ENCODE measurements at regions of chr20 and their contacts with region 1.

Region 1: DNA sequence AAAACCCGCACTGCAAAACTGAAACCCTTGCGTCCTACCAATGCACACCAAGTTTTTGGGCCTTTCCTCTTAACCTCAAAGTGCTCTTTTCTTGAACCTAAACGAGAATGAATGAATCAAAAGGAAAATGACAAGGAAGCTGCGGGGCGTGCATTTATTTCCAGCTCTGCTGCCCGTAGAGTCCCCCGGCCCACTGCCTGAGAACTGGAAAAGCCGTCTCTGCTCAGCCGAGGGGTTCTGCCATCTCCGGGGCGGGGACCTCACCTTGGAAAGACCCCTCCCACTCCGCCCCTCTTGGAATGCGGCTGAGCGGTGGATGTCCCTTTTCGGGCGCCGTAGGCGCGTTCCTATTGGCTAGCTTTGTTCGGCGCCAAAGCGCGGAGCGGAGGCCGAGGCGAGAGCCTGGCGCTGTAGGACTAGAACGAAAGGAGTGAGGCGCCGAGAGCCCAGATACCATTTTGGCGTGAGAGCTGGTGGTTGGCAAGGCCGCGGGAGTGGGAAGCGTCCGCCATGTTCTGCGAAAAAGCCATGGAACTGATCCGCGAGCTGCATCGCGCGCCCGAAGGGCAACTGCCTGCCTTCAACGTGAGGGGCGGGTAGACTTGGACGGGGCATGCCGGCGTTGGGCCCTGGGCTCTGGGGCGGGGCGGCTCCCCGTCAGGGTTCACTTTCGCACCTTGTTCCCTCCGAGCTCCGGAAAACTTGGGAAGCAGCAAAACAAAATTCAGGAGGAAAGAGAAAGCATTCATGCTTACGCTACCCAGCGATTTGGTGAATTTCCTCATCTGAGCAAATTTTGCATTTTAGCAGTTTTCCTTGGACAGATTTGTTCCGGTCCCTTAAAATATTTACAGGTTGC is at the start of gene GINS1:
- DNase-seq: peak; percentile 85
- ATAC-seq: peak; percentile 99
- H3K4me3 ChIP-seq: peak within 1 kb of the TSS; percentile 94
- H3K27ac ChIP-seq: peak within 1 kb of the TSS; percentile 72
- H3K4me1 ChIP-seq: peaks cover 1% of the 10 kb centered on the region
- H3K27me3 ChIP-seq: no peaks in the 10 kb centered on the region
- CTCF ChIP-seq: no peak
- POLR2A ChIP-seq: peak; percentile 71
- RAD21 ChIP-seq: no peak
- total RNA-seq, gene GINS1: 6.6 and 12.2 TPM in 2 replicates

Region 2: DNA sequence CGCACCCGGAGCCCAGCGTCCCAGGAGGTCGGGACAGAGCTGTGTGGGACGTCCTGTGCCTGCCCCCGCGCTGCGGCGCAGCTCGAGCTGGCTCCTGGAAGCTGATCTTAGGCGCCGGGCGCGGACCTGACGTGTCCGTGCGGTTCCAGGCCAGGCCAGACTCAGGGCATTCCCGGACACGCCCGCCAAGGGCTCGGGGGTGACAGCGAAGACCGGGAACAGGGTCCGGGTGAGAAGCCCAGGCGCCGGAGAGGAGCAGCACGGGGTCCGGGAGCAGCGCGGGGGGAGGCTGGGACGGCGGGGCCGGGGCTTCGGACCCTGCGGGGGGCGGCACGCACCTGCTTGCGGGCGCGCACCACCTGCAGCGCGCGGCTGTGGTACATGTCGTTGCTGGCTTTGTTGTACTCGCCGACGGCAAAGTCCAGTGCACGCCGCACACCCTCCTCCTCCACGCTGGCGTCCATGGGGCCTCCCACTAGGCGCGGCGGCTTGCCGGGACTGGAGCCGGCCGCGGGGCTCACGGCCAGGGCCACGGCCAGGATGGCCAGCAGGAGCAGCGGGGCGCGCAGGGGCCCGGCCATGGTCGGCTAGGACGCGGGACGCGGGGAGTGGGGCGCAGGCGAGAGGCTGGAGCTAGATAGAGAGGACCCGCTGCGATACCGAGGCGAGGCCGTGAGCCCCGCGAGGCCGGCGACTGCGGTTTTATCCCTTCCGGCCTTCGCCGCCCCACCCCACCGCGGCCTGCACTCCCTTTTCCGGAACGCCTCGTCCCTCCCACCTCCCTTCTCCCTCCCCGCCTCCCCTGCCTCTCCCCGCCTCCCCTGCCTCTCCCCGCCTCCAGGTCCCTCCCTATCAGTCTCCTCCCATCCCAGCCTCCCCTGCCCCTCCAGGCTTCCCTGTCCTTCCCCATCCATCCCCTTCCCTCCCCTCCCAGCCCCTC is 1770.0 kb before region 1 on chr20 and contains the start of gene CST3:
- CTCF ChIA-PET with region 1: no interaction called
- POLR2A ChIA-PET with region 1: no interaction called
- dilution Hi-C with region 1: no loop called
- in situ Hi-C with region 1: loop called (anchors 25 kb)
- intact Hi-C with region 1: no loop called
- DNase-seq: peak; percentile 81
- ATAC-seq: peak; percentile 89
- H3K4me3 ChIP-seq: peak within 1 kb of the TSS; percentile 96
- H3K27ac ChIP-seq: peak within 1 kb of the TSS; percentile 98
- H3K4me1 ChIP-seq: peaks cover 11% of the 10 kb centered on the region
- H3K27me3 ChIP-seq: no peaks in the 10 kb centered on the region
- CTCF ChIP-seq: no peak
- POLR2A ChIP-seq: peak; percentile 92
- RAD21 ChIP-seq: no peak
- total RNA-seq, gene CST3: 26.0 and 30.8 TPM in 2 replicates

Region 3: DNA sequence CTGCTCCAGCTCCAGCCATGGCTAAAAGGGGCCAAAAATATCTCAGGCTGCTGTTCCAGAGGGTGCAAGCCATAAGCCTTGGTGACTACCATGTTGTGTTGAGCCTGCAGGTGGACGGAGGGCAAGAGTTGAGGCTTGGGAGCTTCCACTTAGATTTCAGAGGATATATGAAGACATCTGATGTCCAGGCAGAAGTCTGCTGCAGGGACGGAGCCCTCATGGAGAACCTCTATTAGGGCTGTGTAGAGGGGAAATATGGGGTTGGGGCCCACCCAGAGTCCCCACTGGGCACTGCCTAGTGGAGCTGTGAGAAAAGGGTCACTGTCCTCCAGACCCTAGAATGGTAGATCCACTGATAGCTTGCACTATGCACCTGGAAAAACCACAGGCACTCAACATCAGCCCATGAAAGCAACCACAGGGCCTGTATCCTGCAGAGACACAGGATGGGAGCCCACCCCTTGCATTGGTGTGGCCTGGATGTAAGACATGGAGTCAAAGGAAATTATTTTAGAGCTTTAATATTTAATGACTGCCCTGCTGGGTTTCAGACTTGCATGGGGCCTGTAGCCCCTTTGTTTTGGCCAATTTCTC is 107.3 kb after region 1 on chr20:
- CTCF ChIA-PET with region 1: no interaction called
- POLR2A ChIA-PET with region 1: no interaction called
- dilution Hi-C with region 1: no loop called
- in situ Hi-C with region 1: no loop called
- intact Hi-C with region 1: no loop called
- DNase-seq: no peak
- ATAC-seq: no peak
- H3K4me3 ChIP-seq: no peak overlapping the region
- H3K27ac ChIP-seq: no peak overlapping the region
- H3K4me1 ChIP-seq: no peaks in the 10 kb centered on the region
- H3K27me3 ChIP-seq: no peaks in the 10 kb centered on the region
- CTCF ChIP-seq: no peak
- POLR2A ChIP-seq: no peak
- RAD21 ChIP-seq: no peak

Measured in IMR-90 (cell line).